Left cardiac atrium (tissue), 4 donors: ENCODE measurements at regions of chr2 and their contacts with region 1.

Region 1: DNA sequence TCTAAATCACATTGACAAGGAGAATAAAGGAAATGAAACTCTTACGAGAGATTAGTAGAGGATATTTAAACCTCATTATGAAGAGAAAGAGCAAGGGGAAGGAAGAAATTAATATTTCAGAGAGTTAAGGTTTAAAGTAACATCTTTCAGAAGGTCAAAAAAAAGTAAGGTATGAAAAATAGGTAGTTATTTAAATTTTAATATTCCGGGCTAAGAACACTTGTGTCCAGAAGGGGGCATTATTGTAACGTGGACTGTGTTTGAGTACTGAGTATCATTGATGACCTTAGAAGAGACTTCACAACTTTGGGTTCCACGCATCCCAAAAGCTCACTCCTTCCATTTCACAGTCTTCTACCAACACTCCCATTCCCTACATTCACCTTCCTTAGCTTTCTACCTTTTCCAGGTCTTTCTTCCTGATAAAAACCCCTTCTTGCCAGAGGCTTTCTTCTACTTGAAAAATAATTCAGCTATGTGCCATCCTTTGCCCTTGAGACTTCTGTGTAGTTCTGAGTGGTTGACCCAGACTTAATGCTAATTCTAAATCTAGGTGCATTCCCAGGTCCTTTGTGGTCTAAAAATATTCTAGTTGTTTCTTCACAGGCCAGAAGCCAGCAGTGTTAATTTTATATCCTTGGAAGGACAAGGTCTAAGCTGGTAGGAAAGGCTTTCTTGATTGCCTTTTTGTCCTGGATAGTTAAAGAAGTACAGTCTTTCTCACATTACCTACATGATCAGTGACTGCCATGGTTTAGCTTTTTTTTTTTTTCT is 16.5 kb downstream of the DYNC1I2 start:
- DNase-seq: no peak
- ATAC-seq: peak in 1 of 2 donors; percentile 44

Region 2: DNA sequence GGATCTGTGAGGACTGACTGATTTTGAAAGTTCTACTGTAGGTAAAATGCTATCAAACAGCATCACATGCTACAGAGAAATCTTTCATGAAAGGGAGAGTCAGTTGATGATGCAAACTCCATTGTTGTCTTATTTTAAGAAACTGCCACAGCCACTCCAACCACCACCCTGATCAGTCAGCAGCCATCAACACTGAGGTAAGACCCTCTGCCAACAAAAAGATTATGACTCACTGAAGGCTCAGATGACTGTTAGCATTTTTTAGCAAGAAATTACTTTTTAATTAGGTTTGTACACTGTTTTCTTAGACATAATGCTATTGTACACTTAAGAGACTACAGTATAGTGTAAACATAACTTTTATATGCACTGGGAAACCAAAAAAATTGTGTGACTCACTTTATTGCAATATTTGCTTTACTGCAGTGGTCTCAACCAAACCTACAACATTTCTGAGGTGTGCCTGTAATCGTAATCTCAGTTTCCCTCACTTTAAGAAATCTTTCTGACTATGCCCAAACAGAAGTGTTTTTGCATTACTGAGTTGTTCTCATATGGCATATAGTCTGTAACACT is 312.7 kb before region 1 on chr2:
- intact Hi-C with region 1: no loop called
- DNase-seq: no peak
- ATAC-seq: no peak

Region 3: GRCh38 chr2:171675618-171676345 is 28.0 kb before region 1 on chr2:
- intact Hi-C with region 1: no loop called
- DNase-seq: no peak
- ATAC-seq: no peak

Region 4: GRCh38 chr2:172113617-172114016 is 409.9 kb after region 1 on chr2:
- intact Hi-C with region 1: loop called in 1 of 2 experiments (anchors 5 kb)
- DNase-seq: no peak
- ATAC-seq: peak in 1 of 2 donors; percentile 27